Naive thymus-derived CD4-positive, alpha-beta T cell (primary cell): ENCODE measurements at regions of chr3 and their contacts with region 1.

Region 1: GRCh38 chr3:141875374-141875892 is 1.0 kb upstream of the ATP1B3 start:
- DNase-seq: peak; percentile 58 to 81 (median 77)
- ATAC-seq: peak; percentile 76
- H3K4me3 ChIP-seq: peak overlapping the region; percentile 82
- H3K4me3 Mint-ChIP-seq: peak overlapping the region; percentile 83 to 95 (median 91)
- H3K27ac ChIP-seq: peak overlapping the region; percentile 98
- H3K27ac Mint-ChIP-seq: peak overlapping the region; percentile 76 to 96 (median 89)
- H3K4me1 ChIP-seq: peaks cover 0 to 28% of the 10 kb centered on the region in 2 donors
- H3K4me1 Mint-ChIP-seq: peaks cover 15 to 38% (median 32%) of the 10 kb centered on the region in 7 donors
- H3K27me3 ChIP-seq: no peaks in the 10 kb centered on the region
- H3K27me3 Mint-ChIP-seq: no peaks in the 10 kb centered on the region

Region 2: DNA sequence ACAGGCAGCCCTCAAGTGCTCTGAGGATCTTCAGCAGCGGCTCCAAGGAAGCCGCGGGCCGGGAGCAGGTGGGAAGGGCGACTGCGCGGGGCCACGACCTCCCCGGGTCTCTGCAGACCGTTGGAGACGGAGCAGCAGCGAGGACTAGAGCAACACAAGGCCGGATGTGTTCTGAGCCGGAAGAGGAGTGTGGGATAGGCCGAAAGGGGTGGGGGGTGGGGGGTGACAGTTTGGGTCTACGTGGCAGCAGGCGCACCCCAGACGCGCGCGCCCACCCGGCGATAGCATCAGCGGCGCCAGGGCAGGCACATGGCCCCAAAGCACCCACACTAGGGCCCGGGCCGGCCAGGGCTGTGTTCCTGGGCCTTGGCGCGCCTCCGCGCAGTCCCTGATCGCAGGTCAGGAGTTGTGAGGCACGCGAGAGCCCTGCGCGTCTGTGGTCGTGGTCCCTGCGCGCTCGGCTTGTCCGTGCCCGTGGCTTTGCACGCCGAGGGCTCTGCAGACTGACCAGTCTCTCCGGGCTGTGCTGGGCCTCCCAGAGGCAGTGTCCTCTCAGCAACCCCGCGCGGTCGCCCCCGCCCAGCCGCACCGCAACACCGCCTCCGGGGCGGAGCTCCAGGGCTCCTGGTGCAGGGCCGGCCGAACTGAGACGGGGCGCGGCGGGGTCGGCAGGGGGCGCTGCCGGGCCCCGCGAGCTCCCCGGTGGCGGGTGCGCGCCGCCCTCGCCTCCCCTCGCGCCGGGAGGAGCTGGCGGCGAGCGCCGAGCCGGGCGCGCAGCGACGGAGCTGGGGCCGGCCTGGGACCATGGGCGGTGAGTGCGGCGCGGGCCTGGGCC is 644.1 kb before region 1 on chr3 and contains the start of gene PXYLP1:
- CTCF ChIA-PET with region 1: no interaction called
- POLR2A ChIA-PET with region 1: no interaction called
- intact Hi-C with region 1: loop called in 1 of 2 experiments (anchors 2 kb)
- DNase-seq: peak; percentile 83 to 97 (median 91)
- ATAC-seq: peak; percentile 98
- H3K4me3 ChIP-seq: peak within 1 kb of the TSS; percentile 72
- H3K4me3 Mint-ChIP-seq: peak within 1 kb of the TSS; percentile 85 to 94 (median 92)
- H3K27ac ChIP-seq: peak within 1 kb of the TSS; percentile 85
- H3K27ac Mint-ChIP-seq: peak within 1 kb of the TSS; percentile 91 to 98 (median 98)
- H3K4me1 ChIP-seq: peaks cover 6 to 33% of the 10 kb centered on the region in 2 donors
- H3K4me1 Mint-ChIP-seq: peaks cover 50 to 66% (median 54%) of the 10 kb centered on the region in 7 donors
- H3K27me3 ChIP-seq: no peaks in the 10 kb centered on the region
- H3K27me3 Mint-ChIP-seq: peaks cover 0 to 6% (median 0%) of the 10 kb centered on the region in 5 donors
- total RNA-seq, gene PXYLP1: 18.6 to 40.9 (median 23.2) TPM

Region 3: DNA sequence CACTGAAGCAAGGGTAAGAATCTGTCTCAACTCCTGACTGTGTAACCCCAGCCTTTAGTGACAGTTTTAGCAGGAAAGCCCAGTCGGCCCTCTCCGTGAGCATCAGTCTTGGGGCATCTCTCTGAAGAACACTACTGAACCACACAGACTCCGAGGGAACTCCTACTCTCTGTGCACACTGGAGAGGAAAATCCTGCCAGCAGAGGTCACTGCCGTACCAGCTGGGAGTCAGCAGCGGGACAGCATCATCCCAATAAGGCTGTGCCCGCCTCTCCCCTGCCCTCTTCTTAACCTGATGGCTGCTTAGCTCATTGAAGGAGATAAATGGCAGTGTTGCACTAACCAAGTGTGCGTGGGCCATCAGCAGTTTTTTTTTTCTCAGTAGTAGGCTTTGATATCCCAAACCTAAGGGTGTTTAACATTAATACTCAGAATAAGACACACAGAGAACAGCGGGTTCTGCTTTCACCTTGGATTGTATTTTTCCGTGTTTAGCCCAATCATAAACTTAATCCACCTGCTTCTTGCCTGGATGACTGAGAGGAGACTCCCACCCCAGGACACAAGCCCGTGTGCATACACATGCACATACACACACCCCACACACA is 415.2 kb before region 1 on chr3:
- CTCF ChIA-PET with region 1: no interaction called
- POLR2A ChIA-PET with region 1: no interaction called
- intact Hi-C with region 1: loop called (anchors 1 kb)
- DNase-seq: peak; percentile 72 to 88 (median 82)
- ATAC-seq: peak; percentile 100
- H3K4me3 ChIP-seq: no peak overlapping the region
- H3K4me3 Mint-ChIP-seq: no peak overlapping the region
- H3K27ac ChIP-seq: no peak overlapping the region
- H3K27ac Mint-ChIP-seq: peak overlapping the region in 1 of 9 donors; percentile 43
- H3K4me1 ChIP-seq: no peaks in the 10 kb centered on the region
- H3K4me1 Mint-ChIP-seq: peaks cover 0 to 20% (median 5%) of the 10 kb centered on the region in 7 donors
- H3K27me3 ChIP-seq: no peaks in the 10 kb centered on the region
- H3K27me3 Mint-ChIP-seq: peaks cover 0 to 2% (median 0%) of the 10 kb centered on the region in 5 donors

Region 4: GRCh38 chr3:141575879-141576743 is 299.3 kb before region 1 on chr3:
- CTCF ChIA-PET with region 1: interaction called, 3 read pairs
- POLR2A ChIA-PET with region 1: no interaction called
- intact Hi-C with region 1: loop called in 1 of 2 experiments (anchors 1 kb)
- DNase-seq: peak in 4 of 9 donors; percentile 14 to 44 (median 41)
- ATAC-seq: peak; percentile 82
- H3K4me3 ChIP-seq: no peak overlapping the region
- H3K4me3 Mint-ChIP-seq: peak overlapping the region in 8 of 10 donors; percentile 7 to 64 (median 48)
- H3K27ac ChIP-seq: peak overlapping the region; percentile 47
- H3K27ac Mint-ChIP-seq: peak overlapping the region; percentile 36 to 88 (median 69)
- H3K4me1 ChIP-seq: no peaks in the 10 kb centered on the region
- H3K4me1 Mint-ChIP-seq: peaks cover 8 to 17% (median 12%) of the 10 kb centered on the region in 7 donors
- H3K27me3 ChIP-seq: no peaks in the 10 kb centered on the region
- H3K27me3 Mint-ChIP-seq: no peaks in the 10 kb centered on the region

Region 5: DNA sequence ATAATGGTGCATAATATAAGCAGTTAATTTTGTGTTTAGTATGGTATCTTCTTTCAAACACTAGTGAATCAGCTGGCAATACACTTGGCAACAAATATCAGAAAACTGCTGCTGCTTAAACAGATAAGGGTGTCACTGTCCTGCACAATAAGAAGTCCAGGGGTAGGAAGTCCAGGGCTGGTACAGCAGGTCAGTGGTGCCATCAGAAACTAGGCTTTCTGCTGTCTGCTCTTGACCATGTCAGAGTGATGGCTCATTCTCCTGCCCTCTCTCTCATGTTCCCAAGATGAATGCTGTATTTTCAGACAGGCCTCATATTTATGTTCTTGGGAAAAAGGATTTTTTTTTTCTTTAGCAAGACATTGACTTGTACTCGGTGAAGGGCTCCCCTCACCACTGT is 121.4 kb before region 1 on chr3:
- CTCF ChIA-PET with region 1: no interaction called
- POLR2A ChIA-PET with region 1: no interaction called
- intact Hi-C with region 1: no loop called
- DNase-seq: no peak
- ATAC-seq: no peak
- H3K4me3 ChIP-seq: no peak overlapping the region
- H3K4me3 Mint-ChIP-seq: no peak overlapping the region
- H3K27ac ChIP-seq: no peak overlapping the region
- H3K27ac Mint-ChIP-seq: peak overlapping the region in 1 of 9 donors; percentile 83
- H3K4me1 ChIP-seq: no peaks in the 10 kb centered on the region
- H3K4me1 Mint-ChIP-seq: peaks cover 0 to 8% (median 0%) of the 10 kb centered on the region in 7 donors
- H3K27me3 ChIP-seq: no peaks in the 10 kb centered on the region
- H3K27me3 Mint-ChIP-seq: no peaks in the 10 kb centered on the region

Region 6: GRCh38 chr3:141913150-141913811 is 37.8 kb after region 1 on chr3:
- CTCF ChIA-PET with region 1: interaction called, 11 read pairs
- POLR2A ChIA-PET with region 1: interaction called, 9 read pairs
- intact Hi-C with region 1: loop called (anchors 1 kb)
- DNase-seq: peak in 7 of 9 donors; percentile 40 to 72 (median 60)
- ATAC-seq: peak; percentile 93
- H3K4me3 ChIP-seq: no peak overlapping the region
- H3K4me3 Mint-ChIP-seq: no peak overlapping the region
- H3K27ac ChIP-seq: no peak overlapping the region
- H3K27ac Mint-ChIP-seq: peak overlapping the region in 2 of 9 donors; percentile 11 to 18
- H3K4me1 ChIP-seq: no peaks in the 10 kb centered on the region
- H3K4me1 Mint-ChIP-seq: peaks cover 0 to 5% (median 3%) of the 10 kb centered on the region in 7 donors
- H3K27me3 ChIP-seq: no peaks in the 10 kb centered on the region
- H3K27me3 Mint-ChIP-seq: no peaks in the 10 kb centered on the region

Region 7: DNA sequence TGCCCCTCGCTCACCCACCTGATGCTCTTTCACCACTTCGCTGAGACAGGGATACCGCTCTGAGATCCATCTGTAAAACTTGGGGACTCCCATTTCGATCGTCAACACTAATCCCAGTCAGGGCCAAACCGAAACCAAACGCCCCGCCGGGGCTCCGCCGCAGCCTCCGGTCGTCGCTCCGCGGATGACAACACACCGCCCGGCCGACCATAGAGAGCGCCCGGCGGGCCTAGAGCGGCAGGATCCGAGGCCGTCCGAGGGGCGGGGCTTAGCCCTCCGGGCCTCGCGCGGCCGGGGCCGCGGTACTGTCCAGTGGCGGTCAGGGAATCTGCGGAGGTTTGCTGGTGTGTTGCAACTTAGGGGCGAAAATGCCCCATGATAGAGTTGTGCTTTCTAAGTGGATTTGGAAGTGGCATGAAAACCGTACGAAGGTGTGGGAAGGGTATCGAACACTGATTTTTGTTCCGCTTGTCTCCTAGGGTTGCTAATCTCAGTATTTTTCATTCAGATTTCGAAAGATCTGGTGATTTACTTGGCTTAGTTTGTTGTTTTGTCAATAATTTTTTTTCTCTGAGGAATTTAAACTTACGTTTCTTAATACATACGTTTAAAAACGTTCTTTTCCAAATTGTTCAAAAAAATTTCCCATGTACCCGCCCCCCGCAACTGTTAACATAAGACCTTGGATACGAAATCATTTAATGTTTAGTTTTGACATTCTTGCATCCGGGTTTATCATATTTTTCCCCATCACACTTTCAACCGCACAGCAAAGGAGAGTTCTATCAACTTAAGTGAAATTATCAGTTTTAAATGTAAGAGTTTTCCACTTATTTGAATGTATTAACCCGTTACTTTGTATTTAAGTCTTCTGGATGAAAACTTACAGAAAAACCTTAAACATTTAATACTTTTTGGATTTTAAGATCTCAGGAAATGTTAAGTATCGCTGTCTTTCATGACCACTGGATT is 572.7 kb after region 1 on chr3 and contains the start of gene XRN1:
- CTCF ChIA-PET with region 1: no interaction called
- POLR2A ChIA-PET with region 1: interaction called, 3 read pairs
- intact Hi-C with region 1: loop called (anchors 1 to 2 kb)
- DNase-seq: peak; percentile 90 to 97 (median 94)
- ATAC-seq: peak; percentile 99
- H3K4me3 ChIP-seq: peak within 1 kb of the TSS; percentile 78
- H3K4me3 Mint-ChIP-seq: peak within 1 kb of the TSS; percentile 89 to 100 (median 98)
- H3K27ac ChIP-seq: peak within 1 kb of the TSS; percentile 99
- H3K27ac Mint-ChIP-seq: peak within 1 kb of the TSS; percentile 98 to 100 (median 99)
- H3K4me1 ChIP-seq: peaks cover 31% of the 10 kb centered on the region in 2 donors
- H3K4me1 Mint-ChIP-seq: peaks cover 26 to 55% (median 51%) of the 10 kb centered on the region in 7 donors
- H3K27me3 ChIP-seq: no peaks in the 10 kb centered on the region
- H3K27me3 Mint-ChIP-seq: no peaks in the 10 kb centered on the region
- total RNA-seq, gene XRN1: 86.1 to 123 (median 103) TPM

Region 8: GRCh38 chr3:143001369-143002082 is 1126.1 kb after region 1 on chr3 and contains the start of gene U2SURP:
- CTCF ChIA-PET with region 1: no interaction called
- POLR2A ChIA-PET with region 1: no interaction called
- intact Hi-C with region 1: loop called (anchors 2 to 5 kb)
- DNase-seq: peak; percentile 77 to 95 (median 88)
- ATAC-seq: peak; percentile 99
- H3K4me3 ChIP-seq: peak within 1 kb of the TSS; percentile 96
- H3K4me3 Mint-ChIP-seq: peak within 1 kb of the TSS; percentile 91 to 100 (median 98)
- H3K27ac ChIP-seq: peak within 1 kb of the TSS; percentile 95
- H3K27ac Mint-ChIP-seq: peak within 1 kb of the TSS; percentile 96 to 100 (median 99)
- H3K4me1 ChIP-seq: peaks cover 13 to 20% of the 10 kb centered on the region in 2 donors
- H3K4me1 Mint-ChIP-seq: peaks cover 34 to 63% (median 53%) of the 10 kb centered on the region in 7 donors
- H3K27me3 ChIP-seq: no peaks in the 10 kb centered on the region
- H3K27me3 Mint-ChIP-seq: peaks cover 0 to 5% (median 2%) of the 10 kb centered on the region in 5 donors
- total RNA-seq, gene U2SURP: 132 to 172 (median 158) TPM